CD4-positive, alpha-beta T cell (primary cell): ENCODE measurements at regions of chrX and their contacts with region 1.

Region 1: DNA sequence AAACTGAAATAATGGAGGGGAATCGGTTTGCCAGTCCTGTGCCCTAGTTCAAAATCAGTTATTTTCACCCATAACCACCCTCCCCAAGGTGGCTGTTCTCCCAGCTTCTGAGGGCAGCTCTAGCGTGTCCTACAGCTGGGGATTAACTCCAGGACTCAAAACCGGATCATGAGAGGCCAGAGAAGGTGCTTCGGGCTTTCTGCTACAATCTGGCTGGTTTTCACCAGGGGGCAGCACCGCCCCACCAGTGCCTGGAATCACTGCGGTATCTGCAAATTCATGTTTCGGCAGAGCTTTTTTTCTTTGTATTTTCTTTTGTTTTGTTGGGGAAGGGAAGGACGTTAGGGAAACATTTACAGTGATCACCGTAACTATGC is 28.4 kb downstream of the PDHA1 start:
- DNase-seq: peak; percentile 33 to 77 (median 56)
- ATAC-seq: peak; percentile 76
- H3K4me3 ChIP-seq: peak overlapping the region; percentile 59
- H3K4me3 Mint-ChIP-seq: peak overlapping the region; percentile 80
- H3K27ac ChIP-seq: no peak overlapping the region
- H3K27ac Mint-ChIP-seq: no peak overlapping the region
- H3K4me1 ChIP-seq: peaks cover 11% of the 10 kb centered on the region
- H3K4me1 Mint-ChIP-seq: peaks cover 9% of the 10 kb centered on the region
- H3K27me3 ChIP-seq: no peaks in the 10 kb centered on the region
- H3K27me3 Mint-ChIP-seq: no peaks in the 10 kb centered on the region
- CTCF ChIP-seq: peak; percentile 67

Region 2: DNA sequence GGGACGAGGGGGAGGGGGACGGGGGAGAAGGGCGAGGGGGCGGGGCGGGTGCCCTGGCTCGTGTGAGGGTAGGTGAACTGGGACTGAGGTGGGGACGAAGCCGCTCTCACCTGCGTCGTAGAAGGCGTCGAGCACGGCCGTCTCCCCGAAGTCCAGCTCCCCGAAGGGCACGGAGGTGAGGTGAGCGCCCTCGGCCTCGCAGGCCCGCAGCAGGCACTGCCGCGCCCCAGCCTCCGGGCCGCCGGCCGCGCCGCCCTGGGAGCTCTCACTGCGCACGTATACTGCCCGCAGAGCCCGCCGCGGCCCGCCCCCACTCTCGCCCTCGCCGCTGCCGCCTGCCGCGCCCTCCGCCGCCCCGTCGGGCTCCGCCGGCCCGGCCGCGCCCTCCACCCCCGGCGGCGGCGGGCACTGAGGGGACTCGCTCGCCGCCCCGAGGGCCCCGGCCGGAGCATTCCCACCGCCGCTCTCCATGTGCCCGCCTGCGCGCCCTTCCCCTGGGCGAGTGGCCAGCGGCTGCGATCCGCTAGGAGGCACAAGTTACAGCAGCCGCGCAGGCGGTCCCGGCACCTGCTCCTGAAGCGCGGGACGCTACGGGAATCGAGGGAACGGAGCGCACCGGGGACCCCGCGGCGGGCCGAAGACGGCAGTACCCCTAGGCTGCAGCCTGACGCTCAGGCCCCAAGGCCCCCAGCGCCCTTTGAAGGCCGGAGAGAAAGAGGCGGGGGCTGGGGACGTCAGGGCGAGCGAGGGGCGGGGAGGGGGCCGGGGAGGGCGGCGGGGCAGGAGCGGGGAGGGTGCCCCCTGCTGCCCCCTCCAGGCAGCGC is 142.8 kb after region 1 on chrX and contains the start of gene MAP3K15:
- CTCF ChIA-PET with region 1: no interaction called
- POLR2A ChIA-PET with region 1: no interaction called
- intact Hi-C with region 1: loop called in 1 of 2 experiments (anchors 5 kb)
- DNase-seq: peak in 4 of 14 experiments; percentile 3 to 27 (median 18)
- ATAC-seq: no peak
- H3K4me3 ChIP-seq: peak within 1 kb of the TSS; percentile 34
- H3K4me3 Mint-ChIP-seq: peak within 1 kb of the TSS; percentile 30
- H3K27ac ChIP-seq: no peak within 1 kb of the TSS
- H3K27ac Mint-ChIP-seq: no peak within 1 kb of the TSS
- H3K4me1 ChIP-seq: peaks cover 6% of the 10 kb centered on the region
- H3K4me1 Mint-ChIP-seq: peaks cover 7% of the 10 kb centered on the region
- H3K27me3 ChIP-seq: peaks cover 6% of the 10 kb centered on the region in 2 experiments
- H3K27me3 Mint-ChIP-seq: peaks cover 35% of the 10 kb centered on the region
- CTCF ChIP-seq: no peak
- total RNA-seq, gene MAP3K15: 0.14 TPM in 1 of 2 experiments, not detected in the other

Region 3: DNA sequence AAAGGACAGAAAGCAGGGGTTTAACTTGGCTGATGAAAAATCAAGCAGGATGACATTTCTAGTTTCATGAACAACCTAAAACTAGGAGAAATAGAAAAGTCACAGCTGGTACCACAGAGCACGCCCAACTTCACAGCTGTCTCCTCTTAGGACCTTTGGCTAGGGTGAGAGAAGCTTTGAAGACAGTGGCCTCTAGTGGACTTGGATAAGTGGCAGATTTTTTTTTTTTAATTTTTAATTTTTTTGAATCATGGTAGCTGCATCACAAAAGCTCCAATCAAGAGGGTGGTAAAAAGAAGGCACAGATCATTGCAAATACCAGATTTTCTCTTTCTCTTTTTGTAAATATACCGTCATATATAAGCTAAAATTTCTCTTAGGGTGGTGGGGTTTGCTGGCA is 163.3 kb after region 1 on chrX:
- CTCF ChIA-PET with region 1: no interaction called
- POLR2A ChIA-PET with region 1: no interaction called
- intact Hi-C with region 1: loop called in 1 of 2 experiments (anchors 10 kb)
- DNase-seq: no peak
- ATAC-seq: no peak
- H3K4me3 ChIP-seq: no peak overlapping the region
- H3K4me3 Mint-ChIP-seq: no peak overlapping the region
- H3K27ac ChIP-seq: no peak overlapping the region
- H3K27ac Mint-ChIP-seq: no peak overlapping the region
- H3K4me1 ChIP-seq: no peaks in the 10 kb centered on the region
- H3K4me1 Mint-ChIP-seq: no peaks in the 10 kb centered on the region
- H3K27me3 ChIP-seq: no peaks in the 10 kb centered on the region
- H3K27me3 Mint-ChIP-seq: no peaks in the 10 kb centered on the region
- CTCF ChIP-seq: no peak